Caco-2 (cell line): ENCODE measurements at regions of chr2 and their contacts with region 1.

Region 1: DNA sequence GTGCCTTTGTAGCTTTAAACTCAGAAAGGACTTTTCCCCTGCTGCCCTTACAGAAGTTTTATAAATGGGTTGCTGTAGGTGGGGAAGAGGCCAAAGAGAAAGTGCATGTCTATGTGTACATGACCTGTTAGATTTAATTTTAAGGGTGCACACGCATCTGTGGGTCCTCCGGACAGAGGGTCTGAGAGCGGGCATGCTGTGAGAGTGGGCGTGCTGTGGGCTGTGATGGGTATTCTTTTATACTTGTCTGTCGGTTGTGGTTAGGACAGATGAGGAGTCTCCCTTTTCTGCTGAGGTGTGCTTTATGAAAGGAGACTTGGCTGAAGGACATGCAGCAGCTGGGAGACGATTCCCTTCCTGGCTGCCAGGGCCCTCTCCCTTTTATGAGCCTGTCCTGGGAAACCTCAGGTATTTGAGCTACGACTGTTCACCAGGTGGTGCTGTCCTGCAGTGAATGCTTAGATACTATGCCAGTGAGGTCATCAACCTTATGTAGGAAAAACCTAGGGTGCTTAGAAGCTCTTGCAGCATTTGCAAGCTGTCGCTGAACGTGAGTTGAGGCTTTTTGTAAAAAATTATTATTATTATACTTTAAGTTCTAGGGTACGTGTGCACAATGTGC is 67.5 kb downstream of the TANC1 start:
- DNase-seq: peak; percentile 79 to 85
- H3K4me3 ChIP-seq: no peak overlapping the region
- H3K4me3 Mint-ChIP-seq: no peak overlapping the region
- H3K27ac Mint-ChIP-seq: no peak overlapping the region
- H3K4me1 ChIP-seq: peaks cover 30% of the 10 kb centered on the region
- H3K4me1 Mint-ChIP-seq: peaks cover 54% of the 10 kb centered on the region
- H3K27me3 ChIP-seq: no peaks in the 10 kb centered on the region
- H3K27me3 Mint-ChIP-seq: no peaks in the 10 kb centered on the region
- CTCF ChIP-seq: peak; percentile 54 to 72

Region 2: DNA sequence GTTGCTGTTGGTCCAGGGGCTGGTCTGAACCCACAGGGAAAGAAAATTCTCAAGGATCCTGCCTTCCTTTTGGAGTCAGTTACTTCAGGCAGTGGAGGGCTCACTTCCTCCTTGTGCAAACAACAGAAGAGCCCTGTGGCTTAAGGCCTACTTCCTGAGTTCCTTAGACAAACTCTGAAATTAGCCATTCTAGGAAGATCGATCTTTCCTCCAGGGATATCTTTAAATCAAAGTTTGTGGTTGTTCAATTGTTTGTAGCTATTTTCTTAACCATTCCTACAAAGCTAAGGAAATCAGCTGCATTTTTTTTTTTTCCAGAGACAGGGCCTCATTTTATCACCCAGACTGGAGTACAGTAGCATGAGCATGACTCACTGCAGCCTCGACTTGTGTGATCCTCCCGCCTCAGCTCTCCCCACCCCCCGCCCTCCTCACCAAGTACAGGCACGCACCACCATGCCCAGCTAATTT is 88.6 kb after region 1 on chr2:
- CTCF ChIA-PET with region 1: interaction called, 77 read pairs
- POLR2A ChIA-PET with region 1: interaction called, 5 read pairs
- intact Hi-C with region 1: no loop called
- DNase-seq: peak; percentile 55 to 75
- H3K4me3 ChIP-seq: no peak overlapping the region
- H3K4me3 Mint-ChIP-seq: peak overlapping the region; percentile 19
- H3K27ac Mint-ChIP-seq: peak overlapping the region; percentile 87
- H3K4me1 ChIP-seq: peaks cover 31% of the 10 kb centered on the region
- H3K4me1 Mint-ChIP-seq: peaks cover 47% of the 10 kb centered on the region
- H3K27me3 ChIP-seq: no peaks in the 10 kb centered on the region
- H3K27me3 Mint-ChIP-seq: no peaks in the 10 kb centered on the region
- CTCF ChIP-seq: no peak

Region 3: GRCh38 chr2:159185401-159186130 is 149.7 kb after region 1 on chr2:
- CTCF ChIA-PET with region 1: interaction called, 6 read pairs
- POLR2A ChIA-PET with region 1: no interaction called
- intact Hi-C with region 1: loop called (anchors 1 kb)
- DNase-seq: peak in 1 of 2 experiments; percentile 63
- H3K4me3 ChIP-seq: no peak overlapping the region
- H3K4me3 Mint-ChIP-seq: no peak overlapping the region
- H3K27ac Mint-ChIP-seq: no peak overlapping the region
- H3K4me1 ChIP-seq: no peaks in the 10 kb centered on the region
- H3K4me1 Mint-ChIP-seq: no peaks in the 10 kb centered on the region
- H3K27me3 ChIP-seq: no peaks in the 10 kb centered on the region
- H3K27me3 Mint-ChIP-seq: no peaks in the 10 kb centered on the region
- CTCF ChIP-seq: peak in 1 of 2 experiments; percentile 75